MCF 10A (cell line): ENCODE measurements at regions of chr11 and their contacts with region 1.

Region 1: GRCh38 chr11:18115360-18116127 is 9.7 kb upstream of the SAAL1 start:
- DNase-seq: peak; percentile 78
- H3K4me3 Mint-ChIP-seq: no peak overlapping the region
- H3K27ac Mint-ChIP-seq: no peak overlapping the region
- H3K4me1 Mint-ChIP-seq: no peaks in the 10 kb centered on the region
- H3K27me3 Mint-ChIP-seq: peaks cover 36% of the 10 kb centered on the region
- CTCF ChIP-seq: peak; percentile 86

Region 2: GRCh38 chr11:18088966-18089365 is 26.6 kb before region 1 on chr11:
- CTCF ChIA-PET with region 1: interaction called, 14 read pairs
- POLR2A ChIA-PET with region 1: no interaction called
- intact Hi-C with region 1: no loop called
- DNase-seq: no peak
- H3K4me3 Mint-ChIP-seq: no peak overlapping the region
- H3K27ac Mint-ChIP-seq: no peak overlapping the region
- H3K4me1 Mint-ChIP-seq: no peaks in the 10 kb centered on the region
- H3K27me3 Mint-ChIP-seq: no peaks in the 10 kb centered on the region
- CTCF ChIP-seq: no peak

Region 3: DNA sequence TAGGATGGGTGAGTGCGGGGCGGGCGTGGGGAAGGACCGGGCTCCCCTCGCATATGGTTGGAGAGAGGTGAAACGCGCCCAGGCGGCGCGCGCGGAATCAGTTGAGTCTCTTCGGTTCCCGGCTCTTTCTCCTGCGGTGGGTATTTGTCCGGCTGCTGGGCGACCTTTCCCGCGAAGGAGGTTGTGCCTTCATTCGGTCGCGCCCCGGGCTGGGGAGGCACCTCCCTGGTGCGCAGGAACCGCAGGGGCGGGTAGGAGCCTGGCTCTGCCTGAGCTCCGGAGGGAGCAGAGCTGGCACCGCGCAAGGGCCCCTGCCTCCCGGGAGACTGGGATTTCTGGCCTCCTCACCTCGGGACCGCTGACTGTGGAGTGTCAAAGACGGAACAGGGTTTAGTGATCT is 93.5 kb after region 1 on chr11:
- CTCF ChIA-PET with region 1: interaction called, 4 read pairs
- POLR2A ChIA-PET with region 1: no interaction called
- intact Hi-C with region 1: loop called (anchors 5 kb)
- DNase-seq: no peak
- H3K4me3 Mint-ChIP-seq: no peak overlapping the region
- H3K27ac Mint-ChIP-seq: no peak overlapping the region
- H3K4me1 Mint-ChIP-seq: no peaks in the 10 kb centered on the region
- H3K27me3 Mint-ChIP-seq: no peaks in the 10 kb centered on the region
- CTCF ChIP-seq: no peak

Region 4: DNA sequence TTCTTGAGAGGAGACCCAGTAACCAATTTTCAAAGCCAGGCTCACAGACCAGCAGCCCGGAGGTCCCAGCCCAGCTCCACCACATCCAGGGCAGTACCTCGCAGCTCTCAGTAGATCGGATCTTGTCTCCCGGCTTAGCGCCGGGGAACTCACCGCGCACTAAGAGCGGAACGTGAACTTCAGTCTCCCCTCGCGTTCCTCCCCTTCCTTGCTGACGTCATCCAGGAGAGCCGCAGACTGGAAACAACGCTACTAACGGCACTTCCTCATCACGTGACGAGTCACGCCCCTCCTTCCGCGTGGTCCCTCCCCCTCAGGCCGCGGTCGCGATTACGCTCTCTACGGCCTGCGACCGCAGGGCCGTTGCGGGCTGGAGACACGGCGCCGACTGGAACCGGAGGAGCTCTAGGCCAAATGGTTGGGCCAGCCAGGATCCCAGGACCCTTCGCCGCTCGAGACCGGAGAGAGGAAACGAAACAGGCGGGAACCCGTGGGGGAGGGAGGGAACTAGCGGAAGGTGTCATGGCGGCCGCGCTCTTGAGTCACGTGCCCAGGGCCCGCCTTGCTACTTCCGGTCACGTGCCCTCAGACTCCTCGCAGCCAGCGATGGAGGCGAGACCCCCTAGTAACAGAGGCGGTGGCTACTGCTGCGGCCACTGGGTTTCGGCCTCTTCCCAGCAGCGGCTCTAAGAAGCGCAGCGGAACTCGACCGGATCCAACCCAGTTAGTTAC is 206.6 kb after region 1 on chr11 and contains the starts of genes GTF2H1 and HPS5:
- CTCF ChIA-PET with region 1: interaction called, 10 read pairs
- POLR2A ChIA-PET with region 1: no interaction called
- intact Hi-C with region 1: no loop called
- DNase-seq: peak; percentile 99
- H3K4me3 Mint-ChIP-seq: peak within 1 kb of the TSS; percentile 92
- H3K27ac Mint-ChIP-seq: peak within 1 kb of the TSS; percentile 100
- H3K4me1 Mint-ChIP-seq: peaks cover 57% of the 10 kb centered on the region
- H3K27me3 Mint-ChIP-seq: no peaks in the 10 kb centered on the region
- CTCF ChIP-seq: no peak
- total RNA-seq, gene GTF2H1: 60.9 and 83.4 TPM in 2 replicates
- total RNA-seq, gene HPS5: 23.6 and 31.8 TPM in 2 replicates

Region 5: DNA sequence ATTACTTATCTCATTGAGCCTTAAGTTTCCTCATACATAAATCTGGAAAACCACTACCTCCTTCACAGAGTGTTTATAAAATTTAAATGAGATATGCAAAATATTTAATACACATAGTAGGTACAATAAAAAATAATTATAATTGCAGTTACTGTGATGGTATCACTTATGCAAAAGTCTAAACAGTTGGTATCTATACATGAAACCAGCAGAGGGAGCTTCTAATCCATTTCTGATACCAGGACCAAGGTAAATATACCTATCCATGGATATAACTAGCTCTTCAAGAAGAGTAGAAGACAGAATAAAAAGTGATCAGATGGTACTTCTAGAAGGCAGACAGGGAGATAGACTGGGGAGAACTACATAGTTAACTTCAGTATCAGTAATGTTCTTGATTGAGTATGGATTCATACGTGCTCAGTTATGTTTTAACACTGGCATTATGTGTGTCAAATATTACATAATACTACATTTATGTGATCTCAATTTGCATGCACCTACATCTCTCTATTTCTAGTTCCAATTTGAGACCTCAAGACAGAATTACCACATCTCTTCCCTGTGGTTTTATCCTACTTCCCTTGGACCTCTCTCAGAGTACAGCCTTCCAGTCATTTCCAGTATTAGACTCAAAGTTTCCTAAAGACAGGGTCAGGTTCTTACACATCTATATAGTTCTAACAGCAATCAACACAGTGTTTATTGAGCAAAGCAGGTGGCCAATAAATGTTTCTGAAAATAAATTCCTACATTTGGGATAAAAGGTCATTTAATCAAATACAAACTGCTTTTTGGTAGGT is 424.9 kb after region 1 on chr11:
- CTCF ChIA-PET with region 1: interaction called, 10 read pairs
- POLR2A ChIA-PET with region 1: no interaction called
- intact Hi-C with region 1: no loop called
- DNase-seq: peak; percentile 35
- H3K4me3 Mint-ChIP-seq: no peak overlapping the region
- H3K27ac Mint-ChIP-seq: no peak overlapping the region
- H3K4me1 Mint-ChIP-seq: no peaks in the 10 kb centered on the region
- H3K27me3 Mint-ChIP-seq: no peaks in the 10 kb centered on the region
- CTCF ChIP-seq: peak; percentile 46

Region 6: GRCh38 chr11:18741783-18742182 is 626.2 kb after region 1 on chr11:
- CTCF ChIA-PET with region 1: interaction called, 11 read pairs
- POLR2A ChIA-PET with region 1: no interaction called
- intact Hi-C with region 1: no loop called
- DNase-seq: no peak
- H3K4me3 Mint-ChIP-seq: no peak overlapping the region
- H3K27ac Mint-ChIP-seq: no peak overlapping the region
- H3K4me1 Mint-ChIP-seq: no peaks in the 10 kb centered on the region
- H3K27me3 Mint-ChIP-seq: peaks cover 23% of the 10 kb centered on the region
- CTCF ChIP-seq: no peak